ENCODE measurements at regions of chr22 and their contacts with region 1.

Region 1: DNA sequence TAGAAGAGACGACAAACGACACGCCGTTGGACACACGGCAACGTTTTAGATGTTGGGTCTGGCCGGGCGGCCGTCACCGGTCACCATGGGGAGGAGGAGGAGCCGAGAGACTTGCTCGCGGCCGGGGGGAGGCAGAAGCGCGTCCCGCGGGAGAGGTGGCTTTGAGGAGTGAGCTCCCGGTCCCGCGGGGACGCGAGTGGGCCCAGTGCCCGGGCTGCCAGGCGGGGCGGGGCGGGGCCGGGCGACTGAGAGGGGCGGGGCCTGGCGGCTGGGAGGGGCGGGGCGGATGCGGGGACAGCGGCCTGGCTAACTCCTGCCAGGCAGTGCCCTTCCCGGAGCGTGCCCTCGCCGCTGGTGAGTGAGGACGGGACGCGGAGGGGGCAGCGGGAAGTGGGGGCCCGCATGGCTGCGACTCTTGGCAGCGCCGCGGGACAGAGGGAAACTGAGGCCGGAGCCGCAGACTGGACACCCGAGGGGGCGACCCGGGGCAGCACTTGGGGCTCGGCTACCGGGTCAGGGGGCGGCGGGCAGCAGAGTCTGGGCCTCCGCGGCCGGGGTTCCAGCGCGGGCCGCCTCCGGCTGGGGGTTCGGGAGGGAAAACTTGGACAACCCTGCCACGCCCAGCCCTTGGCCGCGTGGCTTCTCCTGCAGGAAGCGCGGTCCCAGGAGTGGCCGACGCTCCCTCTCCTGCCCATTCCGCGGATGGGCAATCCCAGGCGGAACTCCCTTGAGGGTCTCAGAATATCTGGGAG is at the start of gene TSPO:
- DNase-seq: peak in 2 of 3 donors; percentile 55 to 59
- H3K4me3 ChIP-seq: peak within 1 kb of the TSS; percentile 86 to 98 (median 98)
- H3K4me3 Mint-ChIP-seq: peak within 1 kb of the TSS; percentile 85 to 100
- H3K27ac ChIP-seq: peak within 1 kb of the TSS; percentile 87 to 89
- H3K27ac Mint-ChIP-seq: peak within 1 kb of the TSS; percentile 88 to 96 (median 95)
- H3K4me1 ChIP-seq: peaks cover 69 to 87% of the 10 kb centered on the region in 2 donors
- H3K4me1 Mint-ChIP-seq: peaks cover 69% of the 10 kb centered on the region
- H3K27me3 ChIP-seq: no peaks in the 10 kb centered on the region
- H3K27me3 Mint-ChIP-seq: no peaks in the 10 kb centered on the region
- CTCF ChIP-seq: no peak
- polyA plus RNA-seq, gene TSPO: 491 to 2,663 (median 2,230) TPM

Region 2: GRCh38 chr22:42614312-42615091 is 536.9 kb before region 1 on chr22 and contains the start of gene POLDIP3:
- intact Hi-C with region 1: loop called in 1 of 2 experiments (anchors 5 kb)
- DNase-seq: peak; percentile 98 to 99 (median 99)
- H3K4me3 ChIP-seq: peak within 1 kb of the TSS; percentile 55 to 96 (median 73)
- H3K4me3 Mint-ChIP-seq: peak within 1 kb of the TSS; percentile 87 to 96
- H3K27ac ChIP-seq: peak within 1 kb of the TSS; percentile 90 to 100
- H3K27ac Mint-ChIP-seq: peak within 1 kb of the TSS; percentile 97 to 100 (median 99)
- H3K4me1 ChIP-seq: peaks cover 50 to 67% of the 10 kb centered on the region in 2 donors
- H3K4me1 Mint-ChIP-seq: peaks cover 63% of the 10 kb centered on the region
- H3K27me3 ChIP-seq: no peaks in the 10 kb centered on the region
- H3K27me3 Mint-ChIP-seq: peaks cover 0 to 3% (median 3%) of the 10 kb centered on the region in 3 donors
- CTCF ChIP-seq: peak; percentile 25
- polyA plus RNA-seq, gene POLDIP3: 46.3 to 55.3 (median 53.8) TPM

Region 3: DNA sequence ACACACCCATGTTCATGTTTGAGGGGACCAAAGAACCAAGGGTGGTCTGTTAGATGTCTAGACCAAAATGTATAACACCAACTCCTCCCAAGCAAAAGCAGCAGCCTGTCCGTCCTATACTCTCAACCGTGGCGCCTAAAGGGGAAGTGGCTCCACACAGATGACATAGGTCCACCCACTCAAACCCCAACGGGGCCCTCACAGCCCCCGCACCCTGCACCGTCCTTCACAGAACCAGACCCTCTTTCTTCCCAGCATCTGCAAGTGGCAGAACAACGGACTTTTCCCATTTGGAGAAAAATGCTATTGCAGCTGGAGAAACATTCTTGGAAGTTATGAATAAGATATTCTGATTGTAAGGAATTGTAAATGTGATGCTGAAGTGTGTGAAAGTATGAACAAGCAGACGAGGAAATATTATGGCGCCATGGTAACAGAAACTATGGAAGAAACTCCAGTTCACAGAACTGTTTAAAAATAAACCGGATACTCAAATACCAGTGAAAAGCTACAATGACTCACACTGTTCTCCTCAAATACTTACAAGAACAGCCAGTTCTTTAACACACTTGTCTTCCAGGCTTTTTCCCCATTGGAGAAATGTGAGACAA is 217.8 kb before region 1 on chr22:
- intact Hi-C with region 1: loop called in 1 of 2 experiments (anchors 10 kb)
- DNase-seq: peak; percentile 77 to 94 (median 89)
- H3K4me3 ChIP-seq: peak overlapping the region in 1 of 3 experiments; percentile 57
- H3K4me3 Mint-ChIP-seq: peak overlapping the region; percentile 61 to 82
- H3K27ac ChIP-seq: peak overlapping the region; percentile 93 to 99
- H3K27ac Mint-ChIP-seq: peak overlapping the region; percentile 100
- H3K4me1 ChIP-seq: peaks cover 97 to 99% of the 10 kb centered on the region in 2 donors
- H3K4me1 Mint-ChIP-seq: peaks cover 98% of the 10 kb centered on the region
- H3K27me3 ChIP-seq: no peaks in the 10 kb centered on the region
- H3K27me3 Mint-ChIP-seq: peaks cover 0 to 2% (median 1%) of the 10 kb centered on the region in 3 donors
- CTCF ChIP-seq: no peak

Region 4: DNA sequence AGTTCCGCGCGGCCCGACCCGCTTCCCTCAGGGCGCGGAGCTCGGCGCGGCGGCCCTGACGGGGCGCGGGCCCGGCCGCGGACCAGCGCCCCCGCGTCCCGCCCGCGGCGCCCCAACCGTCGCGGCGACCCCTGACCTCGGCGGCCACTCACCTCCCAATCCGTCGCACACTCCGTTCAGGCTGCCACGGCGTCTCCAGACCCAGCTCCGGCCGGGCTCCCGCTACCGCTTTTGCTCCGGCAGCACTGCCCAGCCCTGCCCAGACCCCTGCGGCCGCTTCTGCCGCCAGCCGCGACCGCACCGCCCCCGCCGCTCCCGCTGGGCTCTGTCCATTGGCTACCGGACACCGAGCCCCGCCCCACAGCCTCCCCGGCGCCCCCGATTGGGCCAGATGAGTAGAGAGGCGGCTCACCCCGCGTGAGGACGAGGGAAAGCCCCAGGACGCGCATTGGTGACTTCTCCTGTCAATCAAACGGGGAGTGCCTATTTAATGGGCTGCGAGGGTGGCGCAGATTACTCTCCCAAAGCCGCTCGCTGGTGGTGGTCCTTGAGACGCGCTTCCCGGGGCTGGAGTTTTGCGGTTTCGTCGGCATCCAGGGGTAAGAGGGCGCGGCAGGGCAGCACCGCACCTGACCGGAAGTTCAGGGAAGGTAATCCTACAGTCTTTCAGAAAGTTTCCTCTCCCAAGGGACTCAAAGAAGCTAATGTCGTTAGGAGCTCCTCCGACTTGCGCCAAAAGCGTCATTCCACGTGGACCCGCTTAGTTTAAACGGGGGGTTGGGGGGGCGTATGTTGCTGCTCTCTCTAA is 136.4 kb before region 1 on chr22 and contains the start of gene PACSIN2:
- intact Hi-C with region 1: loop called in 1 of 2 experiments (anchors 10 kb)
- DNase-seq: peak; percentile 97 to 98 (median 97)
- H3K4me3 ChIP-seq: peak within 1 kb of the TSS; percentile 79 to 94 (median 88)
- H3K4me3 Mint-ChIP-seq: peak within 1 kb of the TSS; percentile 98 to 99
- H3K27ac ChIP-seq: peak within 1 kb of the TSS; percentile 27 to 81
- H3K27ac Mint-ChIP-seq: peak within 1 kb of the TSS; percentile 84 to 96 (median 89)
- H3K4me1 ChIP-seq: peaks cover 20 to 23% of the 10 kb centered on the region in 2 donors
- H3K4me1 Mint-ChIP-seq: peaks cover 33% of the 10 kb centered on the region
- H3K27me3 ChIP-seq: no peaks in the 10 kb centered on the region
- H3K27me3 Mint-ChIP-seq: peaks cover 0 to 9% (median 1%) of the 10 kb centered on the region in 3 donors
- CTCF ChIP-seq: no peak
- polyA plus RNA-seq, gene PACSIN2: 31.2 to 45.7 (median 40.2) TPM

Region 5: DNA sequence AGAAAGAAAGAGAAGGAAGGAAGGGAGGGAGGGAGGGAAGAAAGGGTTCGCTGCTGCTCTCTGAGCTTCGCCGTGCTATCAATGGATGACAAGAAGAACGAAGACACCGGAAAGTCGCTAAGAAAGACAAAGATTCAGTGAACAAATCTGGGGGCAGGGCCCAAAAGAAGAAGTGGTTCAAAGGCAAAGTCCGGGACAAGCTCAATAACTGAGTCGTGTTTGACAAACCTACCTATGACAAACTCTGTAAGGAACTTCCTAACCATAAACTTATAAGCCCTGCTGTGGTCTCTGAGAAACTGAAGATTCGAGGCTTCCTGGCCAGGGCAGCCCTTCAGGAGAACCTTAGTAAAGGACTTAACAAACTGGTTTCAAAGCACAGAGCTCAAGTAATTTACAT is 59.3 kb before region 1 on chr22:
- intact Hi-C with region 1: loop called in 1 of 2 experiments (anchors 2 kb)
- DNase-seq: peak in 2 of 3 donors; percentile 24 to 38
- H3K4me3 ChIP-seq: no peak overlapping the region
- H3K4me3 Mint-ChIP-seq: peak overlapping the region in 1 of 2 donors; percentile 26
- H3K27ac ChIP-seq: peak overlapping the region in 1 of 2 donors; percentile 53
- H3K27ac Mint-ChIP-seq: peak overlapping the region in 6 of 7 donors; percentile 33 to 86 (median 78)
- H3K4me1 ChIP-seq: peaks cover 34 to 43% of the 10 kb centered on the region in 2 donors
- H3K4me1 Mint-ChIP-seq: peaks cover 34% of the 10 kb centered on the region
- H3K27me3 ChIP-seq: no peaks in the 10 kb centered on the region
- H3K27me3 Mint-ChIP-seq: peaks cover 0 to 2% (median 2%) of the 10 kb centered on the region in 3 donors
- CTCF ChIP-seq: no peak

Region 6: GRCh38 chr22:43187171-43188099 is 36.0 kb after region 1 on chr22:
- intact Hi-C with region 1: loop called in 1 of 2 experiments (anchors 5 kb)
- DNase-seq: peak; percentile 92 to 95 (median 95)
- H3K4me3 ChIP-seq: peak overlapping the region; percentile 59 to 77 (median 65)
- H3K4me3 Mint-ChIP-seq: peak overlapping the region; percentile 76 to 84
- H3K27ac ChIP-seq: peak overlapping the region; percentile 93 to 96
- H3K27ac Mint-ChIP-seq: peak overlapping the region; percentile 91 to 97 (median 95)
- H3K4me1 ChIP-seq: peaks cover 19 to 27% of the 10 kb centered on the region in 2 donors
- H3K4me1 Mint-ChIP-seq: peaks cover 27% of the 10 kb centered on the region
- H3K27me3 ChIP-seq: no peaks in the 10 kb centered on the region
- H3K27me3 Mint-ChIP-seq: peaks cover 3 to 4% (median 3%) of the 10 kb centered on the region in 3 donors
- CTCF ChIP-seq: peak; percentile 55

Measured in CD14-positive monocyte (primary cell).